ENCODE measurements at regions of chr3 and their contacts with region 1.

Region 1: GRCh38 chr3:188749010-188749617 is 422.7 kb upstream of the TPRG1 start:
- DNase-seq: peak; percentile 56
- H3K4me3 Mint-ChIP-seq: no peak overlapping the region
- H3K27ac Mint-ChIP-seq: no peak overlapping the region
- H3K4me1 Mint-ChIP-seq: peaks cover 29% of the 10 kb centered on the region
- H3K27me3 Mint-ChIP-seq: no peaks in the 10 kb centered on the region

Region 2: DNA sequence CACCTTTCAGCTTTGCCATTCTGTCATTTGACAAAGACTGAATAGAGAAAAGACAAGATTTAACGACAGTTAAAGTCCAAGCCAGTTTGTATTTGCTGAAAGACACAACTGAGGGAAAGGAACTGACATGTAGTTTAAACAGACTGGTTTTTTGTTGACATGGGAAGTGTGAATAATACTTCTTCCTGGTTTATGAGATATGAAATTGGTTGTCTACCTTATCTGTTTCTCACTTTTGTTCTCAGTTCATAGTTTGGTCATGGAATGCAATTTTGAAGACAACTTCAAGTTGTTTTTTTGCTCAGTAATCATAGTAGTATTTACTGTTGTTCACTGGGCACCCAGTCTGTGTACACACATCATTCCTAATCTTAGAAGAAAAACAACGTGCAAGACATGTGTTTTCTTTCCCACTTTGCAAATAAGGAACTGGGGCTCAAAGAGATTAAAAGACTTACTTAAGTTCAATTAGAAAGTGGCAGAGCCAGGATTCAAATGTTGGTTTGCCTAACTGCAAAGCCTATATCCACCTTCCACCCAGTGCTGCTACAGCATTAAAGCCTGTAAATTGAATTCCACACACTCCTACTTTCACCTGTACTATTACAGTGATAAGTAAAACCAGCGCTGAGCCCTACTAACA is 491.6 kb before region 1 on chr3:
- CTCF ChIA-PET with region 1: no interaction called
- POLR2A ChIA-PET with region 1: no interaction called
- intact Hi-C with region 1: loop called (anchors 1 kb)
- DNase-seq: no peak
- H3K4me3 Mint-ChIP-seq: no peak overlapping the region
- H3K27ac Mint-ChIP-seq: peak overlapping the region; percentile 47
- H3K4me1 Mint-ChIP-seq: peaks cover 49% of the 10 kb centered on the region
- H3K27me3 Mint-ChIP-seq: no peaks in the 10 kb centered on the region

Region 3: GRCh38 chr3:188624384-188624783 is 124.7 kb before region 1 on chr3:
- CTCF ChIA-PET with region 1: no interaction called
- POLR2A ChIA-PET with region 1: no interaction called
- intact Hi-C with region 1: no loop called
- DNase-seq: no peak
- H3K4me3 Mint-ChIP-seq: no peak overlapping the region
- H3K27ac Mint-ChIP-seq: no peak overlapping the region
- H3K4me1 Mint-ChIP-seq: peaks cover 16% of the 10 kb centered on the region
- H3K27me3 Mint-ChIP-seq: no peaks in the 10 kb centered on the region

Region 4: GRCh38 chr3:188683032-188683521 is 66.0 kb before region 1 on chr3:
- CTCF ChIA-PET with region 1: interaction called, 4 read pairs
- POLR2A ChIA-PET with region 1: no interaction called
- intact Hi-C with region 1: loop called (anchors 1 kb)
- DNase-seq: peak; percentile 74
- H3K4me3 Mint-ChIP-seq: no peak overlapping the region
- H3K27ac Mint-ChIP-seq: peak overlapping the region; percentile 40
- H3K4me1 Mint-ChIP-seq: peaks cover 41% of the 10 kb centered on the region
- H3K27me3 Mint-ChIP-seq: no peaks in the 10 kb centered on the region

Region 5: GRCh38 chr3:188720636-188721035 is 28.5 kb before region 1 on chr3:
- CTCF ChIA-PET with region 1: interaction called, 10 read pairs
- POLR2A ChIA-PET with region 1: interaction called, 4 read pairs
- intact Hi-C with region 1: loop called (anchors 1 kb)
- DNase-seq: no peak
- H3K4me3 Mint-ChIP-seq: no peak overlapping the region
- H3K27ac Mint-ChIP-seq: no peak overlapping the region
- H3K4me1 Mint-ChIP-seq: peaks cover 39% of the 10 kb centered on the region
- H3K27me3 Mint-ChIP-seq: peaks cover 12% of the 10 kb centered on the region

Region 6: DNA sequence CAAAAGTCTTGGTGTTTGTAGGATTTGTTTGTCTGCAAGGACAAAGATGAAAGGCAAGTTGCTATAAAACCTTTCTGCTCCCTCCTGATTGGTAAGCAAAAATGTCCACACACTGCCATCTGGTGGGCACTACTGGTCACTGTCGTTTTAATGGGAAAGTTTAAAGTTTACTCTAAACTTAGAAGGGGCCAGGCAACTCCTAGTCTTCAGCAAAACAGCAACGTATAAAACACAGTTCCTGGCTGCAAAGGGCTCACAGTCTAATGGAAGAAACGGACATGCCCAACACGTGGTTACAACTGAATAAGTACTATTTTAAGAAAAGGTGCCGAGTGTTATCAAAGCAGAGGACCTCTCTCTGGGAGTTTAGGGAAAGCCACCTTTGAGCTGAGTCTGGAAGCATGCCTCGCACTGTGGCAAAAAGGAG is 399.0 kb after region 1 on chr3:
- CTCF ChIA-PET with region 1: no interaction called
- POLR2A ChIA-PET with region 1: no interaction called
- intact Hi-C with region 1: loop called (anchors 5 kb)
- DNase-seq: peak; percentile 77
- H3K4me3 Mint-ChIP-seq: no peak overlapping the region
- H3K27ac Mint-ChIP-seq: no peak overlapping the region
- H3K4me1 Mint-ChIP-seq: peaks cover 19% of the 10 kb centered on the region
- H3K27me3 Mint-ChIP-seq: no peaks in the 10 kb centered on the region

Measured in activated CD4-positive, alpha-beta memory T cell treated with anti-CD3 and anti-CD28 coated beads for 36 hours (primary cell).